AG04449 (cell line): ENCODE measurements at regions of chr19 and their contacts with region 1.

Region 1: GRCh38 chr19:35549174-35549788 is 3.9 kb downstream of the TMEM147 start:
- DNase-seq: no peak
- H3K4me3 ChIP-seq: no peak overlapping the region
- CTCF ChIP-seq: peak; percentile 57

Region 2: DNA sequence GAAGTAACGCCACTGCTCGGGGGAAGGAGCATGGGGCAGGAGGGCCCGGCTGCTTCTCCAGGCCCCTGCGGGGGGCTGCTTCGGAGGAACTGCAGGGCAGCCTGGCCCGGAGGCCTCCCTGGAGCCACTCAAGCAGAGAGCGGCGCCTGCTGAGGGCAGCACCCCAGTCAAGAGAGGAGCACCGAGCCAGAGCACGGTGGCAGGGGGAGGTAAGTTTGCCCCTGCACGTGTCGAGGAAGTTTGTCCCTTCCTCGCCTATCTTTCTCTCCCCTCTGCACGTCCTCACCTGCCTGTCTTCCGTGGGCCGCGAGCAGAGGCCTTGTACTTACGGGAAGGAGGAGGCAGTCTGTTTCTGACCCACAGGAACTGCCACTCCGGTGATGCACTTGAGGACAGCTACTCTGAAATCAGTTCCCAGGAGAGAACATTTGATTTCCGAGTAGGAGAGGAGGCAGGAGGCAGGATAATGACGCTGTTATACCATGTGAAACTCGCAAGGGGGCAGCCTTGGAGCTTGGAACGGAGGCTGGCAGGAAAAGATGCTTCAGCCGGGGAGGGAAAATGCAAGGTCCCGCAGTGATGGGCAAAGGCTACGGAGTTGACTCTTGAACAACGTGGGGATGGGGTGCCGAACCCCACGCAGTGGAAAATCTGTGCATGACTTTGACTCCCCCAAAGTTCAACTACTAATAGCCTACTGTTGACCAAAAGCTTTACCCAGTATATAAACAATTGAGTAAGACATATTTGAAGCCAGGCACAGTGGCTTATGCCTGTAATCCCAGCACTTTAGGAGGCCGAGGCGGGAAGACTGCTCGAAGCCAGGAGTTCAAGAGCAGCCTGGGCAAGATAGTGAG is 196.6 kb before region 1 on chr19:
- CTCF ChIA-PET with region 1: interaction called, 14 read pairs
- POLR2A ChIA-PET with region 1: no interaction called
- DNase-seq: peak; percentile 9
- H3K4me3 ChIP-seq: no peak overlapping the region
- CTCF ChIP-seq: peak; percentile 81

Region 3: DNA sequence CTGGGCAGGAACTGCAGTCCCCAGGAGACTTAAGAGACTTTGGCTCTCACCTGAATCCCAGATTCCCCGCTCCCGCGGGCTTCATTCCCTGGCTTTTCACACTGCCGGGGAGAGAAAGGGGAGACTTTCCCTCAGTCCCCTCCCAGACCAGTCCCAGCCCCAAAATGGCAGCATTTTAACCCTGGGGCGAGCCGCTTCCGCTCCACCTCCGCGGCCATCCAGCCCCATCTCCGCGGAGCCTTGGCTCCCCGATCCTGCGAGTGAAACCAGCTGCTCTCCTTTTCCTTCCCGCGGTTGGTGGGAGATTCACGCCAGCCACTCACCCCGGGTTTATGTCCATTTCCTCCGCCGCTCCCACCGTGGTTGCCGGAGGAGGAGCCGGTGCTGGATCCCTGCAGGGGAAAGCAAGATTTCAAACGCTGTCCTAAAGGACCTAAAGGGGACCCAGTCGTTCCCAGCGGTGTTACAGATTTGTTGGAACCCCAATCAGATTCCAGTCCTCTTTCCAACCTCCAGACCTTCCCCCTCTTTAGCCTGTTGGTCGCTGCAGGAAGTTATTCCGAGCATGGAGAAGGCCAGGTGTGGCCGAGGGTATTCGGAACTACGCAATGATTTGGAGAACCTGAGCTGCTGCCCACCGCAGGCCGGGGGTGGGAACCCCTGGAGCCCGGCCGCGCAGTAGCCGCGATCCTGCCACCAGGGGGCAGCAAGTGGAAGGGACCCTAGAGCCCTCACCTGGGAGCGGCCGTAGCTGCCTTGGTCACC is 39.2 kb before region 1 on chr19:
- CTCF ChIA-PET with region 1: interaction called, 28 read pairs
- POLR2A ChIA-PET with region 1: no interaction called
- DNase-seq: no peak
- H3K4me3 ChIP-seq: peak overlapping the region; percentile 46
- CTCF ChIP-seq: peak; percentile 93

Region 4: GRCh38 chr19:35533822-35534521 is 15.3 kb before region 1 on chr19:
- CTCF ChIA-PET with region 1: interaction called, 11 read pairs
- POLR2A ChIA-PET with region 1: interaction called, 3 read pairs
- DNase-seq: no peak
- H3K4me3 ChIP-seq: no peak overlapping the region
- CTCF ChIP-seq: no peak

Region 5: DNA sequence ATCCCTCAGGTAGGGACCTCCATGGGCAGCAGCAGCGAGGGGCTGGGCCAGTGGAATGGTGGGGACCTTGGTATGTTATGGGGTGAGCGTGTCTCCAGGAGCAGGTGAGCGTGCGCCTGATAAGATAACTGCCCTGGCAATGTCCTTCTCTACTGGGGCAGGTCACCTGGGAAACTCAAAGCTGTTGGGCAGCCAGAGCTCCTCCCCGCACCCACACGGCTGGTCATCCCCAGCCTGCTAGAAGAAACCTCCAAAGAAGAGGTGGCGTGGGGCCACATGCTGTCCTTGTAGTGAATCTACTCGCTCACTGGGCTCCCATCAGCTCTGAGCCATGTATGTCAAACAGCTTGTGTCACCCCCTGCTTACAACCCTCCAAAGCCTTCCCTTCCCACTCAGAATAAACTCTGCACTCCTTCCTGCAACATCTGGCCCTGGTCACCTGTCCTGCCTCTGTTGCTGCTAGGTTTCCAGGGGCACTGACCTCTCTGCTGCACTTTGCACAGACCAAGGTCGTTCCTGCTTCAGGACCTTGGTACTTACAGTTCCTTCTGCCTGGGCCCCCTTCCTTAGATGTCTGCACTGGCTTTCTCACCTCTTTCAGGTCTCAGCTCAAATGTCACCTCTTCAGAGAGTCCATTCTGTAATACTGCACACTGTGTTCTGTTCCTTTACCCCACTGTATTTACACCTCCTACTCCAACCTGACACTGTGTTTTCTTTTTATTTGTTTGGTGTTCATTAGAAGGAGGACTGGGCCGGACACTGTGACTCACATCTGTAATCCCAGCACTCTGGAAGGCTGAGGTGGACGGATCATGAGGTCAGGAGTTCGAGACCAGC is 16.0 kb after region 1 on chr19:
- CTCF ChIA-PET with region 1: interaction called, 44 read pairs
- POLR2A ChIA-PET with region 1: no interaction called
- DNase-seq: no peak
- H3K4me3 ChIP-seq: no peak overlapping the region
- CTCF ChIP-seq: no peak

Region 6: DNA sequence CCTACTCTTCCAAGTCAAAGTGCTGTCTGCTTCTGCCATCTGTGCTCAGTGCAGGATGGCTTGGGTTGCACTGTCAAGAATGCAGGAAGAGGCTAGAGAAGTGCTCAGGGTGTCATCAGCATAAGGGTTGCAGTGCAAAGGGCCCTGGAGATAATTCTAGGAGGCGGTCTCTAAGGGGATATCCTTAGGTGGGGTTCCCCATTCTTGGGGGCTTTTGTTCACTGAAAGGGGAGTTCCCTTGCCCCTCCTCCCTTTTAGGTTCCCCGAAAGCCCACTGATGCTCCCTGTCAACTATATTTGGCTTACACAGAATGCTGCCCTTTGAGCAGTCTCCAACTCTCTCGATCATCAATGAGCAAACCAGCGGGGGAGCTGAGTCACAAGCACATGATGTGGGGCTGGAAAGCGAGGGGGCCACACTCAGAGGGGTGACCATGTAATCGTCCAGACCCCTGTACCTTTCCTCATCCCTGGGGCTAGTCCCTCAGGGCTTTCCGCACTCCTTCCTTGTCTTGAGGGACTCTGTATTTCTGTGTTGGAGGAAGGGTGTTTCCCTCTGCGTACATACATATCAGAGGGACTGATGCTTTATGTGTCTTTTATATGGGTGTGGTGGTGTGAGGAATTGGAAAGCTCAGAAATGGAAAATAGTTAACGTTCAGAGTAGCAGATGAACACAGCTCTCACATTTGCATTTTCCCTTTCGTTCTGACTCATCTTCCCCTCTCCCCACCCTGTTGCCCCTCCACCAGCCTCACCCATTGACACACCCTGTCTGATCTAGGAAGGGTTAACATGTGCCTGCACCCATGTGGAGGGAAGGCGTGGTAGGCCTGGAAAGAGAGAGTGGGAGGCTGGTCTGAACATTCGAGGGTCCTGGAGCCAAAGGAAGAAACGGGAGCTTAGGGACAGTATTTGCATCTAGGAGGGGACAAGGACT is 161.8 kb after region 1 on chr19:
- CTCF ChIA-PET with region 1: interaction called, 23 read pairs
- POLR2A ChIA-PET with region 1: no interaction called
- DNase-seq: no peak
- H3K4me3 ChIP-seq: no peak overlapping the region
- CTCF ChIP-seq: no peak